Lower leg skin (tissue), 4 donors: ENCODE measurements at regions of chr4 and their contacts with region 1.

Region 1: DNA sequence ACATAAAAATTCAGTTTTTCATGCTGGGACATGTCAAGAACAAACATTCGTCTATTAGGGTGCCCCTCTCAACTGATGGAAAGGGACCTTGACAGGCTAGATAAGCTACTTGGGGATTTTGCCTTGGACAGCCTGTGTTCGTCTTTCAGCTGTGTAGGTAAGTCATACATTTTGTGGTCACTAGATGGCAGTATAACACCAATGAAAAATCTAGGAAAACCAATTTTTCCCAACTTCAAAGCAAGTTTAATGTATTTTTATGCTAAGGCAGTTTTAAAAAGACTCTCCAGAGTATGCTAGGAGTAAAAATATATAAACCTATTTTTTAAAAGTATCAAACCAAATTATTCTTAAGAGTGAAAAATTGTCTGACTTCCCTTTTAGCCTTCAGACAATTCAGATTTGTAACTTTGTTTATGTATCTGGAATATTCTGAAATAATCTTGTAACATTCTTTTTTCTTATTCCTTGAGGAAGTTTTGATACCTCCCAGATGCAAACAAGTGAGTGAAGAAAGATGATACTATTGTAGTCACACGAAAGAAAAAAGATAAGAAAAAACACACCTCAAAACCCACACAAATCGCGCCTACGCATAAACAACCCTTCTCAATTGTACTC is 158.3 kb downstream of the CPE start:
- DNase-seq: no peak
- H3K4me3 ChIP-seq: no peak overlapping the region
- CTCF ChIP-seq: no peak
- POLR2A ChIP-seq: no peak

Region 2: DNA sequence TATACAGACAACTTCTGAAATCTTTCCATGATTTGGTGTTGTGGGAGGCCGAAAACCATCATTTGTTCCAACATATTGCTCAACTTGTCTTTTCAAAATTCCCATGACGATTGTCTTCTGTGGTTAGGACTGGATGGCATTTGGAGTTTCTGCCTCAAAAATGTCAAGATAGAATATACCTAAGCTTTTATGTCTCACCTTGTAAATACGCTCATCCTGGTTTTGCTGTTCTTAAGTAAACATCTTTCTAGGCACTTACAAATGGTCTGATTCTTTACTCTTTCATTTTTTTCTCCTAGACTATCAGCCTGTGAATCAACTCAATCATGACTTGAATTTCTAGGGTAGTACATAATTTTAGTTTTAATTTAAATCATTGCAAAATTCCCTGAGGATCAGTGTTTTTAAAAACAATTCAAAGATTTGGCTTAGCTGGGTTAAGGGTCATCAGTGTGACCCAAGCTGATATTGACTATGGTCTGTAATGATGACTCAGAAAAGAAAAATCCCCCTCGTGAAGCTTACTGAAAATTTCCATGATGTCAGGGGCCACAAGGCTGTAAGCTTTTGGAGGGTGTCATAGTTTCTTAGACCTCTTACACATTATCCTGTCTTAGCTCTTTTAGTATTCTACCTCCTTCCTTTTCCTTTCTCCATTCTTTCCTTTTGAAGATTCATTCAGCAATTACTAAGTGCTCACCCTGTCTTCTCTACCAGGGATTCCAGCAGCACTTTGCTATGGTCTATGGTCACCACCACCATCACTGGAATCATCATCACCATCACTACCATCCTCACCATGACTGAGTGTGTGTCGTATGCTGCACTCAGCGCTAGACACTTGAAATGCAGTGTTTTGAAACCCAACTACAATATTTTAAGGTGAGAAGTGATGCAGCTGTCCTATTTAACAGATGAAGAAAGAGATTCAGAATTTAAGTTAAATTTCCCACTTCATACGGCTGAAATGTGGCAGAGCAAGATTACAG is 33.9 kb before region 1 on chr4:
- intact Hi-C with region 1: no loop called
- DNase-seq: no peak
- H3K4me3 ChIP-seq: no peak overlapping the region
- CTCF ChIP-seq: no peak
- POLR2A ChIP-seq: no peak

Region 3: GRCh38 chr4:166091912-166092510 is 554.9 kb after region 1 on chr4:
- intact Hi-C with region 1: loop called (anchors 10 kb)
- DNase-seq: no peak
- H3K4me3 ChIP-seq: no peak overlapping the region
- CTCF ChIP-seq: peak in 1 of 3 donors; percentile 41
- POLR2A ChIP-seq: no peak